ENCODE measurements at regions of chr14 and their contacts with region 1.

Region 1: DNA sequence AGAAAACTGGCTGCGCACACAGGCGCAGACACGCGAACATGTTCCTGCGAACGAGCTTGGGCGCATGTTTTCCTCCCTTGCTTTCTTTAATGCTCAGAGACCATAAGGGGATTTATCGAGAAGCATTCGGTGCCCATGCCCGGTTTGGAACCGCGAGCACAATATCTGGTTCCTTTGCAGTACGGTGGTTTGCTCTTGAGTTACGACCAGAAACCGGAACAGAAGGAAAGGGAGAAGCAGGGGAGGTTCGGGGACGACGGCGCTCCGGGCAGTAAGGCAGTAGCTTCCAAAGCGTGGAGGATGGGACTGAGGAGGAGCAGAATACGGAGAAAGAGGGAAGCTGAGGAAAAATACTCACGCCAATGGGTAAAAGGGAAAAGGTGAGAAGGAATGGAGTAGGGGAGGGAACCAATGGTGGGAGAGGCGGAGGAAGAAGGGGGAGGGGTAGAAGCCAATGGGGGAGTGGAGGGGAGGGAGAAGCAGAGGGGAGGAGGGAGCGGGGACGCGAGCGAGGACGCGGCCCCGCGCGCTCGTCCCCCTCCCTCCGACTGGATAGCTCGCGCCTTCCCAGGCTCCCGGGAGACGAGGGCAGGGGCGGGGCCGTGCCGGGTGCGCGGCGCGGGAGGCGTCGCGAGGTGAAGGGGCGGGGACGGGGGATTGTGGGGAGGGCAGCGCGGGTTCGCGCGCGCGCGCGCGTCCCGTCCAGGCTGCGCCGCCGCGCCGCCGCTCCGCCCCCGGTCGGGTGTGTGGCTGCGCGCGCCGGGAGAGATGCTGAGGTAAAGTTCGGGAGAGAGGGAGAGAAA is 625 bp upstream of the ARHGAP5 start:
- DNase-seq: peak; percentile 94
- H3K4me3 ChIP-seq: peak overlapping the region; percentile 56 to 77 (median 72)
- H3K27ac ChIP-seq: peak overlapping the region; percentile 53
- H3K4me1 ChIP-seq: peaks cover 17% of the 10 kb centered on the region
- H3K27me3 ChIP-seq: peaks cover 2 to 4% of the 10 kb centered on the region in 2 experiments
- CTCF ChIP-seq: no peak
- POLR2A ChIP-seq: peak; percentile 28

Region 2: DNA sequence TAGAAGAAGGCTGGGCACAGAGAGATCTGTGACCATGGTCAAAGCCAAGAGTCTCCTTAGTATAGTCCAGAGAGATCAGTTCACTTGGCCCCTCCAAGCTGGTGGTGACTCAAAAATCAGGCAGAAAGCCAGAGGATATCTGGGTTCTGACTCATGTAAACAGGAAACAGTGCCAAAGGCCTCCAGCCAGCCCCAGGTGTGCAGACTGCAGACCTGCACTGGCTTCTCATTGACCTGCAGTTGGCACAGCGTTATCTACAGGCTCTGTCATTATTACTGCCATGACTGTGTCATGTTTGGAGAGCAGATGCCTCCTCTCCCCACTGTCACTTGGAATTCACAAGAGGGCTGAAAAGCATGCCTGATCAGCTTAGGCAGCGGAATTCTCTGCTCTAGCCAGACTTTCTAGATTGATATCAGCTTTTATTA is 1853.1 kb before region 1 on chr14:
- CTCF ChIA-PET with region 1: no interaction called
- POLR2A ChIA-PET with region 1: no interaction called
- dilution Hi-C with region 1: no loop called
- intact Hi-C with region 1: loop called (anchors 5 kb)
- DNase-seq: peak; percentile 97
- H3K4me3 ChIP-seq: no peak overlapping the region
- H3K27ac ChIP-seq: peak overlapping the region; percentile 74
- H3K4me1 ChIP-seq: peaks cover 58% of the 10 kb centered on the region
- H3K27me3 ChIP-seq: no peaks in the 10 kb centered on the region
- CTCF ChIP-seq: no peak
- POLR2A ChIP-seq: no peak

Region 3: DNA sequence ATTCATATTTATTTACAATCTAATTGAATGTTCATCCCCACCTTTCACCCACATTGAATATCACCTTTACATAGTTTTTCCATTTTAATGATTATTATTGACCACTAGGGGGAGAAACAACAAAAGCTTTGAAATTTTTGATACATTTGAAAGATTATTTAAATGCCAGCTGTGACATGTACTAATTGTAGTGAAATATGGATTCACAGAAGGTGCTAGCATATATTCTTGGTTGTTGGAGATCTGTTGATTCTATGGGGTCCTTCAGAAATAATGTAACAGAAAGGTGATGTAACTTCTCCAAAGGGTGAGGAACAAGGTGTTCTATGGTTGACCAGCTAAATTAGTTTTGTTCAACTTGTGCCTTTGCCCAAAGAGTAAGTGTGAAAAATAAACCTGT is 566.3 kb before region 1 on chr14:
- CTCF ChIA-PET with region 1: interaction called, 8 read pairs
- POLR2A ChIA-PET with region 1: no interaction called
- dilution Hi-C with region 1: no loop called
- intact Hi-C with region 1: loop called (anchors 5 kb)
- DNase-seq: peak; percentile 38
- H3K4me3 ChIP-seq: no peak overlapping the region
- H3K27ac ChIP-seq: no peak overlapping the region
- H3K4me1 ChIP-seq: no peaks in the 10 kb centered on the region
- H3K27me3 ChIP-seq: peaks cover 1 to 2% of the 10 kb centered on the region in 2 experiments
- CTCF ChIP-seq: peak; percentile 13 to 22
- POLR2A ChIP-seq: no peak

Region 4: DNA sequence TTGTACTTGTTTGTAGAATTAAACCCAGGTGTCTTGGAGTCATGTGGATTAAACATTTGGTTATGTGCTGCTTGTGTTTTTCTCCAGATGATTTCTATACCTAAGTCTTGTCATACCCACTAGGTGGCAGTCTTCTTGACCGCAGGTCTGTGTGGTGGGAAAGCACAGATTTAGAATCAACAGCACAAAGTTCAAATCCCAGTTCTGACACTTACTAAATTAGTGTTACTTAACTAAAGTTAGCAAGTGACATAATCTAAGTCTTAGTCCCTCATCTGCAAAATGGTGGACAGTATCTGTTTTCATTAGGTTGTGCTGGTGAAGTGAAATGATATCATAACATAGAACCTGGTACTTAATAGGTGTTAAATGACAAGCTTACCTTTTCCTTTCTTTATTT is 150.4 kb before region 1 on chr14:
- CTCF ChIA-PET with region 1: interaction called, 8 read pairs
- POLR2A ChIA-PET with region 1: interaction called, 3 read pairs
- dilution Hi-C with region 1: no loop called
- intact Hi-C with region 1: loop called (anchors 1 kb)
- DNase-seq: peak; percentile 60
- H3K4me3 ChIP-seq: no peak overlapping the region
- H3K27ac ChIP-seq: peak overlapping the region; percentile 95
- H3K4me1 ChIP-seq: peaks cover 21% of the 10 kb centered on the region
- H3K27me3 ChIP-seq: no peaks in the 10 kb centered on the region
- CTCF ChIP-seq: peak; percentile 46 to 53
- POLR2A ChIP-seq: no peak

Region 5: DNA sequence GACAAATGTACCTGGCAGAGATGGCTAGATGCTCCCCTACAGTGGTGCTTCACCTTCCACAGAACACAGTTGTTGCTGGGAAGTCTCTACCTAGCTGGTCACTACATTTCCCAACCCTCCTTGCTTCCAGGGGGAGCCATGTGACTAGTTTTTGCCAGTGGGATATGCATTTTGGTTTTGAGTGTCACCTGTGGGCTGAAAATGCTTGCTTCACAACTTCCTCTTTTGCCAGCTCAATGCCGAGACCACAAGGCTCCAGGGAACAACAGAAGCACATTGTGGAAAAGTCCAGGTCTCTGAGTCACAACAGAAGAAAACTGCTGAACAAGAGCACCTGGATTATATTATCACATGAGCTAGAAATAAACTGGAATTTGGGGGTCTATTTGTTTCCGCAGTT is 47.9 kb before region 1 on chr14:
- CTCF ChIA-PET with region 1: no interaction called
- POLR2A ChIA-PET with region 1: no interaction called
- dilution Hi-C with region 1: no loop called
- intact Hi-C with region 1: no loop called
- DNase-seq: no peak
- H3K4me3 ChIP-seq: no peak overlapping the region
- H3K27ac ChIP-seq: no peak overlapping the region
- H3K4me1 ChIP-seq: no peaks in the 10 kb centered on the region
- H3K27me3 ChIP-seq: peaks cover 0 to 1% of the 10 kb centered on the region in 2 experiments
- CTCF ChIP-seq: no peak
- POLR2A ChIP-seq: no peak

Region 6: GRCh38 chr14:32382704-32383103 is 306.2 kb after region 1 on chr14:
- CTCF ChIA-PET with region 1: interaction called, 8 read pairs
- POLR2A ChIA-PET with region 1: no interaction called
- dilution Hi-C with region 1: no loop called
- intact Hi-C with region 1: loop called (anchors 1 kb)
- DNase-seq: no peak
- H3K4me3 ChIP-seq: no peak overlapping the region
- H3K27ac ChIP-seq: no peak overlapping the region
- H3K4me1 ChIP-seq: no peaks in the 10 kb centered on the region
- H3K27me3 ChIP-seq: no peaks in the 10 kb centered on the region
- CTCF ChIP-seq: peak in 1 of 2 donors; percentile 13
- POLR2A ChIP-seq: no peak

Region 7: DNA sequence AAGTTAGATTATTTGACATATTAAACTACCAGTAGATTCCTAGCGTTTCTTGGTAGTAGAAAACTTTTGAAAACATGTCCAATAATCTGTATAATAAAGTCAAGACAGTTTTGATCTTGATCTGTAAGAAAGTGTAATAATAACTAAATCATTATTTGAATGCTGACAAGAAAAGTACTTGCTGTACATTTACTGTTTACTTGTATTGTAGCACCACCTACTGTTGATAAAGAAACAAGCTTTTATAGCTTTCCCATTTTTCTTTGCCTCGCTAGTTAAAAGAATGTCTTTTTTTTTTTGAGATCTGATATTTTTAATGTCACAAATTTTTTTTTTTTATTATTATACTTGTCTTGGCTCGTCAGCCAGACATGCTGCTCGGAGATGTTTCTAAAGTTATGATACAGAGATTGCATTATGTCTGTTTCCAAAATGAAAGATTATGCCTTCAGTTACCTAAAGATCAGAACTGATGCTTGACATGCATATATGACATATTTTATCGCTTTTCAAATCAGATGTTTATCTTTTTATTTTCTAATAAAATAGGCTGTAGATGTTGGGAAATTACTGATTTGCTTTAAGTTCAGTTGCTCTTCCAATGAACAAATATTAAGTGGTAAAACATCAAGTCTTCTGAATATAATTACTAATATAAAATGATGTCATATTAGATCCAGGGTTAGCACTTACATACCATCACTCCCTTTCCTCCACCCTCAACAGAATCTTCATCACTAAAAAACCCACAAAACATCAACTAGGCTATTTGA is 393.1 kb after region 1 on chr14:
- CTCF ChIA-PET with region 1: interaction called, 30 read pairs
- POLR2A ChIA-PET with region 1: no interaction called
- dilution Hi-C with region 1: no loop called
- intact Hi-C with region 1: loop called (anchors 1 kb)
- DNase-seq: peak; percentile 62
- H3K4me3 ChIP-seq: no peak overlapping the region
- H3K27ac ChIP-seq: no peak overlapping the region
- H3K4me1 ChIP-seq: peaks cover 3% of the 10 kb centered on the region
- H3K27me3 ChIP-seq: no peaks in the 10 kb centered on the region
- CTCF ChIP-seq: peak; percentile 17 to 36
- POLR2A ChIP-seq: no peak

Region 8: GRCh38 chr14:32560209-32560857 is 483.9 kb after region 1 on chr14:
- CTCF ChIA-PET with region 1: interaction called, 15 read pairs
- POLR2A ChIA-PET with region 1: no interaction called
- dilution Hi-C with region 1: no loop called
- intact Hi-C with region 1: loop called (anchors 1 kb)
- DNase-seq: peak; percentile 76
- H3K4me3 ChIP-seq: no peak overlapping the region
- H3K27ac ChIP-seq: no peak overlapping the region
- H3K4me1 ChIP-seq: peaks cover 2% of the 10 kb centered on the region
- H3K27me3 ChIP-seq: no peaks in the 10 kb centered on the region
- CTCF ChIP-seq: peak; percentile 76 to 83
- POLR2A ChIP-seq: no peak